Adrenal gland (tissue), 19 donors: ENCODE measurements at regions of chr7 and their contacts with region 1.

Region 1: DNA sequence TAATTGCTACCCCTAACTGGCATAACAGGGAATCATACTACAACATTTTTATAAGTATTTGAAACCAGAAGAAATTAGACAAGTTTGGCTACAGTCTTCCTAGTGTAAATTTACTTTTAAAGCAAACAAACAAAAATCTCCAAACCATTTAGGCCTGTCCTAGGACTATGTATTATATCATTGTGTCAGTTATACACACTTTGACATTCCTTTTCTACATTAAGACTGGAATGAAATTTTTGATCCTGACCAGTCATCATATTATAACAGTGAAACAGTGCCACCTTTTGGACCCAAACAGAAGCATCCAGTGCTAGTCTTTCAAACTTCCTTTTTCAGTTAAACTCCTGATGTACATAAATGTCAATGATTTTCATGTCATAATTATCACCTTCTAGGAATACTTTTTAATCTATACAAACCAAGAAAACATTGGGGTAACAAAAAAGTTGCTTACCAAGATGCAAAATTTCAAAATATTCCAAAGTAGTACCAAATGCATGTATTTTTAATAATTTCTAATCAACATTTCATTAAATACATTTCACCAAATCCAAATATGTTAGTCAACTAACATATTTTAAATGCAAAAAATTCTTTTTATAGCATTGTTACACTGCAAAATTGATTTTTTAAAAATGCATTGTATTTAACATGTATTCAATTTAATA is 75.7 kb downstream of the IMMP2L start:
- DNase-seq: peak in 3 of 7 donors; percentile 22 to 29 (median 29)
- H3K4me3 ChIP-seq: no peak overlapping the region
- H3K27ac ChIP-seq: no peak overlapping the region
- H3K4me1 ChIP-seq: no peaks in the 10 kb centered on the region
- H3K27me3 ChIP-seq: no peaks in the 10 kb centered on the region
- CTCF ChIP-seq: peak; percentile 44 to 86 (median 80)
- POLR2A ChIP-seq: no peak

Region 2: GRCh38 chr7:111089822-111090426 is 396.7 kb before region 1 on chr7:
- intact Hi-C with region 1: loop called in 1 of 2 experiments (anchors 5 kb)
- DNase-seq: no peak
- H3K4me3 ChIP-seq: no peak overlapping the region
- H3K27ac ChIP-seq: no peak overlapping the region
- H3K4me1 ChIP-seq: peaks cover 5 to 17% of the 10 kb centered on the region in 2 donors
- H3K27me3 ChIP-seq: no peaks in the 10 kb centered on the region
- CTCF ChIP-seq: peak; percentile 47 to 85 (median 74)
- POLR2A ChIP-seq: no peak

Region 3: DNA sequence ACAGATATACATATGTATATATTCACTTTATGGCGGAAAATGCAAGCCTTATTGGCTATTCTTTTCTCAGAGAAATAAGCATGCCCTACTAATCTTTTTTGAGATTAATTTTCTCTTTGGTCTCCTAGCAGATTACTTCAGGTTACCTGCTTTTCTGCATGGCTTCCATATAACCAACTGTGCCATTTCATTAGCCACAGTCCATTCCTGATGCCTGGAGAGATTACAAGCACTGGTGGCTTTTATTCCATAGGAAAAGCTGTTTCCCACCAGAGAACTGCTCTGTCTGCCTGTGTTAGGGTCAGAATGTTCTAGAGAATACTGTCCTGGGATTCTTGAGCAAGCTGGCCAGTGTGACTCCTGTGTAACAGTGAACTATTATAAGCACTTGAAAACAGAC is 335.9 kb before region 1 on chr7:
- intact Hi-C with region 1: loop called in 1 of 2 experiments (anchors 5 kb)
- DNase-seq: no peak
- H3K4me3 ChIP-seq: no peak overlapping the region
- H3K27ac ChIP-seq: no peak overlapping the region
- H3K4me1 ChIP-seq: no peaks in the 10 kb centered on the region
- H3K27me3 ChIP-seq: no peaks in the 10 kb centered on the region
- CTCF ChIP-seq: no peak
- POLR2A ChIP-seq: no peak

Region 4: DNA sequence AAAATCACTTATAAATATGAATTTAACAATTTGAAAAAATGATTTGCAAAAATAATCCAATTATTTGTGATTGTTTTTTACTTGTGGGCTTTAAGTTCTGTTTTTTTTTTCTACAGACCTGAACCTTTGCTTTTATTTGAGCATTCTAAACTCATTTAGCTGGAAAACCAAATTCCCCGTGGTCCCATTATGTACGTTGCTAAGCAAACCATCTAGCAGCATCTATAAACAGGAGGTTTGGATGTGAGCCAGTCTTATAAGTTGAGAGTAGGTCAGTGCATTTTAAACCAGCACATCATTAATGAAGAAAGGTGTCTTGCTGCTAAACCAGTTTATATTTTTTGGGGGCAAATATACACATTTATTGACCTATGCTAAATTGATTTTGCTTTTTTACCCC is 318.4 kb before region 1 on chr7:
- intact Hi-C with region 1: no loop called
- DNase-seq: no peak
- H3K4me3 ChIP-seq: no peak overlapping the region
- H3K27ac ChIP-seq: no peak overlapping the region
- H3K4me1 ChIP-seq: peaks cover 0 to 7% of the 10 kb centered on the region in 2 donors
- H3K27me3 ChIP-seq: no peaks in the 10 kb centered on the region
- CTCF ChIP-seq: no peak
- POLR2A ChIP-seq: no peak

Region 5: DNA sequence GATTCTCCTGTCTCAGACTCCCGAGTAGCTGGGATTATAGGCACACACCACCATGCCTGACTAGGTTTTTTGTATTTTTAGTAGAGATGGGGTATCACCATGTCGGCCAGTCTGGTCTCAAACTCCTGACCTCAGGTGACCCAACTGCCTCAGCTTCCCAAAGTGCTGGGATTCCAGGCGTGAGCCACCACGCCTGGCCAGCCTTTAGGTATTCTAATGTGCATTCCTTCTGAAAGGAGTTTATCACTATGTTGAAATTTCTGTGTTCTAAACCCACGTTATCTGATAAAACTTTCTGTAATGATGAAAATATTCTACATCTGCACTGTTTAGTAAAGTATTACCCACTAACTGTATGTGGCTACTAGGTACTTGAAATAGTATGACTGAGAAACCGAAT is 186.3 kb after region 1 on chr7:
- intact Hi-C with region 1: no loop called
- DNase-seq: no peak
- H3K4me3 ChIP-seq: no peak overlapping the region
- H3K27ac ChIP-seq: no peak overlapping the region
- H3K4me1 ChIP-seq: no peaks in the 10 kb centered on the region
- H3K27me3 ChIP-seq: no peaks in the 10 kb centered on the region
- CTCF ChIP-seq: no peak
- POLR2A ChIP-seq: no peak